CD14-positive monocyte (primary cell): ENCODE measurements at regions of chr10 and their contacts with region 1.

Region 1: GRCh38 chr10:87861953-87862678 is 1.2 kb downstream of the KLLN start:
- DNase-seq: peak; percentile 96 to 98 (median 97)
- H3K4me3 ChIP-seq: peak overlapping the region; percentile 81 to 97 (median 86)
- H3K4me3 Mint-ChIP-seq: peak overlapping the region; percentile 98 to 99
- H3K27ac ChIP-seq: peak overlapping the region; percentile 89 to 93
- H3K27ac Mint-ChIP-seq: peak overlapping the region; percentile 92 to 98 (median 97)
- H3K4me1 ChIP-seq: peaks cover 16 to 39% of the 10 kb centered on the region in 2 donors
- H3K4me1 Mint-ChIP-seq: peaks cover 25% of the 10 kb centered on the region
- H3K27me3 ChIP-seq: no peaks in the 10 kb centered on the region
- H3K27me3 Mint-ChIP-seq: no peaks in the 10 kb centered on the region
- CTCF ChIP-seq: peak; percentile 3

Region 2: GRCh38 chr10:88386821-88387773 is 525.0 kb after region 1 on chr10:
- intact Hi-C with region 1: loop called (anchors 5 to 10 kb)
- DNase-seq: peak; percentile 25 to 54 (median 52)
- H3K4me3 ChIP-seq: peak overlapping the region; percentile 17 to 63 (median 36)
- H3K4me3 Mint-ChIP-seq: no peak overlapping the region
- H3K27ac ChIP-seq: peak overlapping the region in 1 of 2 donors; percentile 35
- H3K27ac Mint-ChIP-seq: no peak overlapping the region
- H3K4me1 ChIP-seq: peaks cover 28 to 45% of the 10 kb centered on the region in 2 donors
- H3K4me1 Mint-ChIP-seq: peaks cover 15% of the 10 kb centered on the region
- H3K27me3 ChIP-seq: no peaks in the 10 kb centered on the region
- H3K27me3 Mint-ChIP-seq: no peaks in the 10 kb centered on the region
- CTCF ChIP-seq: no peak

Region 3: DNA sequence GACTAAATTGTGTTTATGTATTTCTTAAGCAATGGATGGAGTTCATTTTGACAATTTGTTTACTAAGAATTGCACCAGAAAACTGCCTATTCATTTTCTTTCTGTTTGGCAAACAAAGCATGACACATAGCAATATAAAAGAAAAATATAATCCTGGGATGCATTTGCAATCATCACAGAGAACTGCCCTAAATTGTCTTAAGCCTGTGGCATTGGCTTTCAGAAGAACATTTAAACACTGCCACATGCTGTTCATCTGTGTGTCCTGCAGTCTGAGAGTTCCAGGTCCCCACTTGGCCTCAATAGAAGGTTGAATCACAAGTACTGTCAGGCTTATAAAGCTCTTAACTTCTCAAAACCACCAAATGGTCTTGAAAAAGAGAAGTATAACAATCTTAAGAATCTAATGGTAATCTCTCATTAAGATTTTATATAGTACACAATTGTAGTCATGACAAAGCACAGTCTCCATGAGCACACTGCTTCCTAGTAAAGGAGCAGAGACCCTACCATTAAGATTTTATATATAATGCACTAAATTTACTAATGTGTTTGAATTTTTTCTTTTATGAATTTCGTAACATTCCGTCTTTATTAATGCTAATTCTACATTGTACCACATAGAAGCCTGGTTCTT is 691.1 kb after region 1 on chr10:
- intact Hi-C with region 1: loop called (anchors 5 to 10 kb)
- DNase-seq: peak; percentile 44 to 70 (median 63)
- H3K4me3 ChIP-seq: no peak overlapping the region
- H3K4me3 Mint-ChIP-seq: no peak overlapping the region
- H3K27ac ChIP-seq: no peak overlapping the region
- H3K27ac Mint-ChIP-seq: no peak overlapping the region
- H3K4me1 ChIP-seq: peaks cover 7 to 9% of the 10 kb centered on the region in 2 donors
- H3K4me1 Mint-ChIP-seq: peaks cover 10% of the 10 kb centered on the region
- H3K27me3 ChIP-seq: no peaks in the 10 kb centered on the region
- H3K27me3 Mint-ChIP-seq: peaks cover 0 to 1% (median 0%) of the 10 kb centered on the region in 3 donors
- CTCF ChIP-seq: peak; percentile 85